B cell (primary cell): ENCODE measurements at regions of chr6 and their contacts with region 1.

Region 1: GRCh38 chr6:111709615-111710398 is 104.1 kb upstream of the TRAF3IP2 start:
- DNase-seq: peak; percentile 77
- ATAC-seq: peak; percentile 96
- H3K4me3 ChIP-seq: no peak overlapping the region
- H3K4me3 Mint-ChIP-seq: peak overlapping the region; percentile 6
- H3K27ac ChIP-seq: no peak overlapping the region
- H3K27ac Mint-ChIP-seq: peak overlapping the region; percentile 32
- H3K4me1 ChIP-seq: peaks cover 3 to 5% of the 10 kb centered on the region in 2 donors
- H3K4me1 Mint-ChIP-seq: no peaks in the 10 kb centered on the region
- H3K27me3 ChIP-seq: no peaks in the 10 kb centered on the region
- H3K27me3 Mint-ChIP-seq: no peaks in the 10 kb centered on the region
- CTCF ChIP-seq: peak; percentile 87

Region 2: GRCh38 chr6:111997078-111997852 is 287.5 kb after region 1 on chr6:
- CTCF ChIA-PET with region 1: interaction called, 112 read pairs
- POLR2A ChIA-PET with region 1: interaction called, 3 read pairs
- intact Hi-C with region 1: loop called (anchors 1 kb)
- DNase-seq: peak; percentile 79
- ATAC-seq: peak; percentile 93
- H3K4me3 ChIP-seq: no peak overlapping the region
- H3K4me3 Mint-ChIP-seq: peak overlapping the region; percentile 30
- H3K27ac ChIP-seq: no peak overlapping the region
- H3K27ac Mint-ChIP-seq: no peak overlapping the region
- H3K4me1 ChIP-seq: peaks cover 4 to 6% of the 10 kb centered on the region in 2 donors
- H3K4me1 Mint-ChIP-seq: peaks cover 9% of the 10 kb centered on the region
- H3K27me3 ChIP-seq: peaks cover 0 to 11% (median 3%) of the 10 kb centered on the region in 4 experiments
- H3K27me3 Mint-ChIP-seq: peaks cover 21% of the 10 kb centered on the region
- CTCF ChIP-seq: peak; percentile 94

Region 3: GRCh38 chr6:112029045-112029822 is 319.4 kb after region 1 on chr6:
- CTCF ChIA-PET with region 1: interaction called, 38 read pairs
- POLR2A ChIA-PET with region 1: no interaction called
- intact Hi-C with region 1: loop called (anchors 1 kb)
- DNase-seq: peak; percentile 71
- ATAC-seq: peak; percentile 39
- H3K4me3 ChIP-seq: no peak overlapping the region
- H3K4me3 Mint-ChIP-seq: no peak overlapping the region
- H3K27ac ChIP-seq: no peak overlapping the region
- H3K27ac Mint-ChIP-seq: no peak overlapping the region
- H3K4me1 ChIP-seq: peaks cover 10 to 13% of the 10 kb centered on the region in 2 donors
- H3K4me1 Mint-ChIP-seq: peaks cover 16% of the 10 kb centered on the region
- H3K27me3 ChIP-seq: no peaks in the 10 kb centered on the region
- H3K27me3 Mint-ChIP-seq: peaks cover 15% of the 10 kb centered on the region
- CTCF ChIP-seq: peak; percentile 79

Region 4: GRCh38 chr6:112163295-112164257 is 453.8 kb after region 1 on chr6:
- CTCF ChIA-PET with region 1: interaction called, 30 read pairs
- POLR2A ChIA-PET with region 1: no interaction called
- intact Hi-C with region 1: loop called (anchors 1 kb)
- DNase-seq: peak; percentile 75
- ATAC-seq: peak; percentile 96
- H3K4me3 ChIP-seq: no peak overlapping the region
- H3K4me3 Mint-ChIP-seq: no peak overlapping the region
- H3K27ac ChIP-seq: no peak overlapping the region
- H3K27ac Mint-ChIP-seq: no peak overlapping the region
- H3K4me1 ChIP-seq: peaks cover 9% of the 10 kb centered on the region in 2 donors
- H3K4me1 Mint-ChIP-seq: peaks cover 12% of the 10 kb centered on the region
- H3K27me3 ChIP-seq: peaks cover 0 to 22% (median 13%) of the 10 kb centered on the region in 4 experiments
- H3K27me3 Mint-ChIP-seq: peaks cover 53% of the 10 kb centered on the region
- CTCF ChIP-seq: peak; percentile 99